Kidney (tissue), 22 donors: ENCODE measurements at regions of chrX and their contacts with region 1.

Region 1: GRCh38 chrX:72021975-72022374 is 109.7 kb downstream of the RTL5 start:
- DNase-seq: peak in 1 of 5 donors; percentile 28
- H3K4me3 ChIP-seq: no peak overlapping the region
- H3K27ac ChIP-seq: no peak overlapping the region
- H3K4me1 ChIP-seq: peaks cover 0 to 4% (median 0%) of the 10 kb centered on the region in 3 donors
- H3K27me3 ChIP-seq: peaks cover 6% of the 10 kb centered on the region
- CTCF ChIP-seq: peak; percentile 3

Region 2: DNA sequence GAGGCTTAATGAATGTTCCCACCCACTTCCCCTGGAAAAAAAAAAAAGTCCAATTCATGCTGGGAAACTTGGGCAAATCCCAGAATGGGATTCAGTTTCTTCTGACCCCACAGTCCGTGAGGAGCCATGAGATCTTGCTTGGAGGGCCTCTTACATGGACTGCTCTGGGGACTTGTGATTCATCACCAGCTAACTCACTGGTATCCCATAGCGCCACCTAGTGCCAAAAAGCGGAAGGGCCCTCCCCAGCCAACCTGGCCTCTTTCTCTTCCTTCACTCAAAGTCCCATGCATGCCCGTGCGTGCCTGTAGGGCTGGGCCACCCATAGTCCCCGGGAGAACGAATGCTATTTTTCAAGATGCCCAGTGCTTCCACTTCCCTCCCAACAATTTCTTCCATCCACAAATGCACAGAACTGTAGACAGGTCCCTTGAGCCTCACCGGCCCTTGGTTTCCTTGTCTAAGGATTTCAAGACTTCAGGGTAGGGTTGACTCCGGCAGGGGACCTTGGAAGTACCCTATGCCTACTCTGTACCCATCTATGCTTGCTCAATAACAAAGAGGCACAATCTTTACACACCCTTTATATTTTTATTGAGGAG is 104.7 kb after region 1 on chrX:
- intact Hi-C with region 1: loop called (anchors 10 kb)
- DNase-seq: peak; percentile 87 to 91 (median 88)
- H3K4me3 ChIP-seq: no peak overlapping the region
- H3K27ac ChIP-seq: peak overlapping the region in 1 of 2 donors; percentile 83
- H3K4me1 ChIP-seq: peaks cover 5 to 32% (median 10%) of the 10 kb centered on the region in 3 donors
- H3K27me3 ChIP-seq: peaks cover 2% of the 10 kb centered on the region
- CTCF ChIP-seq: peak; percentile 81